HCT116 (cell line): ENCODE measurements at regions of chr2 and their contacts with region 1.

Region 1: DNA sequence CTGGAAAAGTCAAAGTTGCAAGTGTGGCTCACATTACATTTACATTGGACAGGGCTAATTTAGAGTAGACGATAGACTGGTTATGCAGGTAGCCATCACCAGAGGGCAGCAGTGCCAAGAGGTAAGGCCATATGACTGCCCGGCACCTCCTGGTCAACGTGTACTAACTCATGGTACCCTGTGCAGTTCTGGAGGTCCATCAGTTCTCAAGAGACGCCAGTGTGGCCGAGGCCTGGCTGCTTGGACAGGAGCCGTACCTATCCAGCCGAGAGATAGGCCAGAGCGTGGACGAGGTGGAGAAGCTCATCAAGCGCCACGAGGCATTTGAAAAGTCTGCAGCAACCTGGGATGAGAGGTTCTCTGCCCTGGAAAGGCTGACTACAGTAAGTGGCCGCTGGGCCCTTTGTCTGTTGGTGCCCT is 65.8 kb upstream of the EML6 start:
- DNase-seq: peak; percentile 23
- ATAC-seq: peak; percentile 98
- H3K4me3 ChIP-seq: no peak overlapping the region
- H3K27ac ChIP-seq: no peak overlapping the region
- H3K4me1 ChIP-seq: no peaks in the 10 kb centered on the region
- H3K27me3 ChIP-seq: no peaks in the 10 kb centered on the region
- CTCF ChIP-seq: peak; percentile 56 to 70 (median 68); a peak in 5 of 6 replicates
- POLR2A ChIP-seq: no peak
- RAD21 ChIP-seq: peak; percentile 73

Region 2: DNA sequence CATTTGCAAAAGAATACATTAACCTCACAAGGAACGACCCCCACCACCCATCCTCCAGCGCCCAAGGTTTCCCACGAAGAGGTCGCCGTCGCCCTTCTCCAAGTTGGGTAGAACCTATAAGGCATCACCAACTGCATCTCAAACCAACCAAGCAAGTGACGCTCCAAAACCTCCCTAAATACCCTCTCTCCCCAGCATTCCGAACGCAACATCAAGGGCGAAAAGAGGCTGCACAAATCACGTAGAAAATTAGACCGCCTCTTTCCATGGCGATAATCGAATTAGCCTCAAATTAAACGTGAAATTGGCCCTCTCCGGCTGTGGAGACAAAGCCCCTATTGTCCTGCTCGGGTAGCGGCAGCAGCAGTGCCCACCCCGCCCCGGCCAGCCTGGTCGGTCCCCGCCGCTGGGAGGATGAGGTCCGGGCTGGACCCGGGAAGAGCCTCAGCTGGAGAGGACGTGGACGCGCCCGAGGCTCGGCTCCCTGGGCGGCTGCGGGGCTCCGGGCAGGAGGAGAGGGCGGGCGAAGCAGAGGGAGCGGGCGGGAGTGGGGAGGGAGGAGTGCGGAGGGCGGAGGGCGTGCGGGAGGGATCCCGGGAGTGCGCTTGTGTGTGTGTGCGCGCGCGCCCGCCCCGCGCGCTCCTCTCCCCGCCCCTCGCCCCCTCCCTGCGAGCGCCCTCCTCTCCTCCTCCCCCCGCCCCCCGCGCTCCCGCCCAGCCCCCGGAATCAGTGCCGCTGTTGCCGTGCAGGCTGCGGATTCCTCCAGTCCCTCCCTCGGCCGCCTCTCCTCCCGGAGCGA is 201.9 kb before region 1 on chr2 and contains the start of gene SPTBN1:
- CTCF ChIA-PET with region 1: no interaction called
- POLR2A ChIA-PET with region 1: no interaction called
- RAD21 ChIA-PET with region 1: no interaction called
- intact Hi-C with region 1: no loop called
- DNase-seq: peak; percentile 61
- ATAC-seq: peak; percentile 75
- H3K4me3 ChIP-seq: peak within 1 kb of the TSS; percentile 67 to 78
- H3K27ac ChIP-seq: peak within 1 kb of the TSS; percentile 65
- H3K4me1 ChIP-seq: peaks cover 5 to 25% of the 10 kb centered on the region in 2 experiments; a peak in 3 of 4 replicates
- H3K27me3 ChIP-seq: no peaks in the 10 kb centered on the region
- CTCF ChIP-seq: no peak; a peak in 1 of 6 replicates
- POLR2A ChIP-seq: no peak
- RAD21 ChIP-seq: no peak
- total RNA-seq, gene SPTBN1: 84.4 TPM

Region 3: GRCh38 chr2:54704688-54705605 is 47.3 kb after region 1 on chr2:
- CTCF ChIA-PET with region 1: interaction called, 6 read pairs
- POLR2A ChIA-PET with region 1: no interaction called
- RAD21 ChIA-PET with region 1: no interaction called
- intact Hi-C with region 1: loop called (anchors 1 kb)
- DNase-seq: peak; percentile 42
- ATAC-seq: peak; percentile 82
- H3K4me3 ChIP-seq: no peak overlapping the region
- H3K27ac ChIP-seq: no peak overlapping the region
- H3K4me1 ChIP-seq: no peaks in the 10 kb centered on the region
- H3K27me3 ChIP-seq: no peaks in the 10 kb centered on the region
- CTCF ChIP-seq: peak; percentile 33 to 78 (median 69); a peak in 5 of 6 replicates
- POLR2A ChIP-seq: no peak
- RAD21 ChIP-seq: peak; percentile 84

Region 4: DNA sequence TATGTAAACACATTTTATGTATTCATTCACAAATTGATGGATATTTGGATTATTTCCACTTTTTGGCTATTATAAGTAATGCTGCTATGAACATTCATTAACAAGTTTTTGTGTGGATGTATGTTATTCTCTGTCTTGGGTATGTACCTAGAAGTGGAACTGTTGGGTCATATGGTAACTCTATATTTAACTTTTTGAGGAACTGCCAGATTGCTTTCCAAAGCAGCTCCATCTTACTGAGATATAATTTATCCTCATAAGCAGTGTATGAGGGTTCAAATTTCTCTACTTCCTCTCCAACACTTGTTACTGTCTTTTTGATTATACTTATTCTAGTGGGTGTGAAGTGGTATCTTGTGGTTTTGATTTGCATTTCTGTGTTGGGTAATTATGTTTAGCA is 58.7 kb after region 1 on chr2:
- CTCF ChIA-PET with region 1: no interaction called
- POLR2A ChIA-PET with region 1: no interaction called
- RAD21 ChIA-PET with region 1: no interaction called
- intact Hi-C with region 1: no loop called
- DNase-seq: no peak
- ATAC-seq: no peak
- H3K4me3 ChIP-seq: no peak overlapping the region
- H3K27ac ChIP-seq: no peak overlapping the region
- H3K4me1 ChIP-seq: no peaks in the 10 kb centered on the region
- H3K27me3 ChIP-seq: no peaks in the 10 kb centered on the region
- CTCF ChIP-seq: no peak
- POLR2A ChIP-seq: no peak
- RAD21 ChIP-seq: no peak